ENCODE measurements at regions of chr15 and their contacts with region 1.

Region 1: DNA sequence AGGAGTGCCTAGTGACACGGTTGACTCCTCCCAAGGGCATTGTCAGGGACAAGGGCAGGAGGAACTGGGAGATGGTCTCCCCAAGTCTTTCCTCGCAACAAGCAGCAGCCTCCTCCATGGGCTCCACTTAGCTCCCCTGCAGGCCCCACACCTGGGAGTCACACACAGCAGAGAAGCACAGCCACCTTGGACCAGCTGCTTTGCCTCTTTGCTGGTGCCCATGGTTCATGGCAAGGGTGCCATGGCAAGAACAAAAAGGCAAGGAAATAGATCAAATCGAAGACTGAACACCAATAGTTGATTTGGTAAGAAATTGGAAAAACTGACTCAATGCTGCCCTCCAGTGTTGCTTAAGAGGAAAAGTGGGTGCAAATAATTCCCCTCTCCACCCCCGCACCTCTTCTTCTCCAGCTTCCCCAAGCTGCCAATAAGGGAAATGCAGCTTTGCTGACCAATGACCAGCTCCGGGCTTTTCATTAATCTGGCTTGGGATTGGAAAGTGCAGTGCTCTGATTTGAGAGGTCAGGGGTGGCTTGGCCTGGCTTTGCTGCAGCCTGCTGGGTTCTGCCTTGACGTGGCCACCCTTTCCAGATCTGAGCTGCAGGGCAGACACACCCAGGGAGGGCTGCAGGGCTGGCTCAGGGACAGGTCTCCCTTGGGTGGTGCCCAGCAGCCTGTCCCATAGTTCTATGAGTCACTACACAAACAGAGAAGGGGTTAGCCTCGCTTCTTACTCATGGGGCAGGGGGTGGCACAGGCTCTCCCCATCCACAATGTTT is 162.0 kb downstream of the KLF13 start:
- DNase-seq: peak in 1 of 2 experiments; percentile 14
- H3K4me3 ChIP-seq: no peak overlapping the region
- H3K27ac ChIP-seq: no peak overlapping the region
- H3K4me1 ChIP-seq: no peaks in the 10 kb centered on the region
- H3K27me3 ChIP-seq: no peaks in the 10 kb centered on the region; the same call in 1 of the 2 replicates
- CTCF ChIP-seq: peak; percentile 55

Region 2: DNA sequence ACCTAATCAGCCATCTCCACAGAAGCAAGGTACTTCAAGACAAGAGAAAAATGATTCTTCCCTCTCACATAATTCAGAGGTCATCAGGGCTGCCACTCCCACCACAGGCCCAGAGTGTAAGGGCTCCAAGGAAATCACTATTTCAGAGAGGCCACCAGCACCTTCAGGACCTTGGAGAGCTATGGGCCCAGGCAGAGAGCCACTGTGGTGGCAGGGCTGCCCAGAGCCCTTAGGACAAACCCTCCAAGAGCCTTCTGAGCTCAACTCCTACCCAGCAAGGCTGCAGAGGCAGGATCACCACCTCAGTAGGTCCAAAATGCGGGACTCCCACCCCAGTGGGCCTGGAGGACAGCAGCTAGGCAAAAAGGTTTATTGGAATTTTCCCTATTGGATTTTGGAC is 602.8 kb before region 1 on chr15:
- CTCF ChIA-PET with region 1: no interaction called
- POLR2A ChIA-PET with region 1: no interaction called
- intact Hi-C with region 1: loop called (anchors 5 kb)
- DNase-seq: no peak
- H3K4me3 ChIP-seq: no peak overlapping the region
- H3K27ac ChIP-seq: no peak overlapping the region
- H3K4me1 ChIP-seq: no peaks in the 10 kb centered on the region
- H3K27me3 ChIP-seq: 0 out of 2 replicates have a peak, but pooled peaks cover 5% of the 10 kb centered on the region
- CTCF ChIP-seq: no peak

Region 3: GRCh38 chr15:31202953-31203352 is 285.7 kb before region 1 on chr15:
- CTCF ChIA-PET with region 1: no interaction called
- POLR2A ChIA-PET with region 1: no interaction called
- intact Hi-C with region 1: loop called (anchors 2 kb)
- DNase-seq: no peak
- H3K4me3 ChIP-seq: no peak overlapping the region
- H3K27ac ChIP-seq: no peak overlapping the region
- H3K4me1 ChIP-seq: no peaks in the 10 kb centered on the region
- H3K27me3 ChIP-seq: peaks cover 29% of the 10 kb centered on the region; the same call in 1 of the 2 replicates
- CTCF ChIP-seq: no peak